ENCODE measurements at regions of chr16 and their contacts with region 1.

Region 1: GRCh38 chr16:3880623-3881498 is at the start of gene CREBBP:
- DNase-seq: peak; percentile 27 to 91
- H3K4me3 ChIP-seq: peak within 1 kb of the TSS; percentile 78 to 100
- H3K27ac ChIP-seq: peak within 1 kb of the TSS; percentile 79 to 92
- H3K4me1 ChIP-seq: peaks cover 17 to 20% of the 10 kb centered on the region in 2 donors
- H3K27me3 ChIP-seq: no peaks in the 10 kb centered on the region
- CTCF ChIP-seq: no peak
- total RNA-seq, gene CREBBP: 73.7 TPM

Region 2: DNA sequence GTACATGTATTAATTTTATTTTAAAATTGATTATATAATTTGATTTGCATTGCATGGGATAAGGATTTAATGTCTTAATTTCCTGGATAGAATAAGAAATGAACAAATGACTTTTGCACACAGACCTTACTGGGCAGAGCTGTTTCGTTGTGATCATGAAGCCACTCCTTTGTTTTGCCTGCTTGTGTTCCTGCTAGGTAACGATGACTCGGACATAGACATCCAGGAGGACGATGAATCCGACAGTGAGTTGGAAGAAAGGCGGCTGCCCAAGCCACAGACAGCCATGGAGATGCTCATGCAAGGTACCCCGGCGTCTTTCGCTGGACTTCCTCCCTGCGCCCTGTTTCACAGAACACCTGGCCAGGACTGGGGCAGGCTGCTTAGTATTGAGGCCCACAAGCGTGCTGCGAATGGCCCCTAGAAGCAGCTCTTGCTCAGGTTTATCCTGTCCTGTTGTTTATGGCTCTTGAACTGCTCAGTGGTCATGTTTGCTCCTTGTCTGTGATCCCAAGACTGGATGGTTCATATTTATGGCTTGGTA is 350.4 kb before region 1 on chr16:
- intact Hi-C with region 1: loop called (anchors 2 kb)
- DNase-seq: no peak
- H3K4me3 ChIP-seq: no peak overlapping the region
- H3K27ac ChIP-seq: no peak overlapping the region
- H3K4me1 ChIP-seq: peaks cover 0 to 2% of the 10 kb centered on the region in 2 donors
- H3K27me3 ChIP-seq: no peaks in the 10 kb centered on the region
- CTCF ChIP-seq: no peak

Region 3: DNA sequence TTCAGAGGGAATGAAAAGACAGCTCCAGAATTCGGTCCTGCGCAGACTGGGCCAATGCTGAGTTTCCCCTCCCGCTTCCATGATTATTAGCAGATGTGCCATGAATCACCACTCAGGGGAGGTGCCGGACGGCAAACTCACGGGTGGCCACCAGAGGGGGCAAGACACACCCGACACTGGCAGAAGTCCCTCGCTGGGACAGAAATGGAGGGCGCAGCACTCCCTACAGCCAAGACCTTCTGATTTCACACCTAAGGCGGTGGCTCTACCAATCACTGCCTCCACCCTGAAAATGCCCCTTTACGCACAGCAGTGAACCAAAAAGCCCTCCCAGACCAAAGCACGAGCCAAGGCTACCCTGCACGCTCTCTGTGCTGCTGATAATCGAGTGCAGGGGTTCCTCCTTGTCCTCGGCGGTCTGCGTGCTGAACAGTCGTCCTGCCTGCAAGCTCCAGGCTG is 190.4 kb before region 1 on chr16:
- intact Hi-C with region 1: loop called (anchors 1 kb)
- DNase-seq: peak; percentile 73 to 97
- H3K4me3 ChIP-seq: peak overlapping the region; percentile 39 to 62
- H3K27ac ChIP-seq: peak overlapping the region in 1 of 2 donors; percentile 63
- H3K4me1 ChIP-seq: peaks cover 0 to 9% of the 10 kb centered on the region in 2 donors
- H3K27me3 ChIP-seq: no peaks in the 10 kb centered on the region
- CTCF ChIP-seq: peak; percentile 85 to 94 (median 88)

Region 4: GRCh38 chr16:3717235-3718018 is 163.4 kb before region 1 on chr16 and contains the start of gene TRAP1:
- intact Hi-C with region 1: loop called (anchors 1 kb)
- DNase-seq: peak; percentile 44 to 93
- H3K4me3 ChIP-seq: peak within 1 kb of the TSS; percentile 78 to 95
- H3K27ac ChIP-seq: peak within 1 kb of the TSS; percentile 84 to 87
- H3K4me1 ChIP-seq: peaks cover 0 to 7% of the 10 kb centered on the region in 2 donors
- H3K27me3 ChIP-seq: no peaks in the 10 kb centered on the region
- CTCF ChIP-seq: no peak
- total RNA-seq, gene TRAP1: 169 TPM

Region 5: GRCh38 chr16:3938848-3939624 is 58.2 kb after region 1 on chr16:
- intact Hi-C with region 1: no loop called
- DNase-seq: no peak
- H3K4me3 ChIP-seq: peak overlapping the region; percentile 53 to 80
- H3K27ac ChIP-seq: no peak overlapping the region
- H3K4me1 ChIP-seq: peaks cover 0 to 5% of the 10 kb centered on the region in 2 donors
- H3K27me3 ChIP-seq: no peaks in the 10 kb centered on the region
- CTCF ChIP-seq: peak; percentile 80 to 99 (median 99)

Measured in ascending aorta (tissue), 2 donors.